Activated CD4-positive, alpha-beta memory T cell treated with anti-CD3 and anti-CD28 coated beads for 36 hours (primary cell): ENCODE measurements at regions of chr1 and their contacts with region 1.

Region 1: GRCh38 chr1:184386312-184387068 is at the start of gene C1orf21:
- DNase-seq: peak; percentile 82
- H3K4me3 Mint-ChIP-seq: peak within 1 kb of the TSS; percentile 74
- H3K27ac Mint-ChIP-seq: no peak within 1 kb of the TSS
- H3K4me1 Mint-ChIP-seq: peaks cover 15% of the 10 kb centered on the region
- H3K27me3 Mint-ChIP-seq: peaks cover 69% of the 10 kb centered on the region
- total RNA-seq, gene C1orf21: 1.9 to 2.2 TPM

Region 2: GRCh38 chr1:183989078-183989577 is 397.4 kb before region 1 on chr1:
- CTCF ChIA-PET with region 1: no interaction called
- POLR2A ChIA-PET with region 1: no interaction called
- intact Hi-C with region 1: no loop called
- DNase-seq: peak; percentile 79
- H3K4me3 Mint-ChIP-seq: no peak overlapping the region
- H3K27ac Mint-ChIP-seq: no peak overlapping the region
- H3K4me1 Mint-ChIP-seq: peaks cover 19% of the 10 kb centered on the region
- H3K27me3 Mint-ChIP-seq: no peaks in the 10 kb centered on the region

Region 3: DNA sequence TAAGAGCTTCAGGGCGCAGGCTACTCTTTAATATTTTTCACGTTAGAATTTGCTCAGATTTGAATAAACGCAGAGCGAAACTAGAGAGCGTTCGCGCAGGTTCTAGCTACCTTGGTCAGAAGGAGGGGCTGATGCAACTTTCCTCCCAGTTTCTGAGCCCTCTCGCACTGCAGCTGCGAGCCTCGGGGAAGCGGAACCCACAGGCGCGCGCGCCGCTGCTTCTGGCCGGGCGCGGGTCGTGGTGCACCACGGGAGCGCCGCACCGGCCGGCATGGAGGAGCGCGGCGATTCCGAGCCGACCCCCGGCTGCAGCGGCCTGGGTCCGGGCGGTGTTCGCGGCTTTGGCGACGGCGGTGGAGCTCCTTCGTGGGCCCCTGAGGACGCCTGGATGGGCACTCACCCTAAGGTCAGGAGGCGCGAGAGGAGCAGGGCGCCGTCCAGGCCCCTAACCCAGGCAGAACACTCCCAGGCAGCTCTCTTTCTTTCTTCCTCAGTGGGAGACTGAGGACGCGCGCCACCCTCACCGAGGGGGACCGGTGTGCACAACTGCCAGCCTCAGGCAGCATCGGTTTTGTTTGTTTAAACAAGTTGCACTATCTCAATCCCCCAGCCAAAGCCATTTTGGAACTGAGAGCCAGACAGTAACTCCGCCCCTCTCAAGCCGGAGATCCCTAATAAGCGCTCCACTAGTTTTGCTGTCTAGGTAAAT is 334.9 kb before region 1 on chr1 and contains the start of gene TSEN15:
- CTCF ChIA-PET with region 1: no interaction called
- POLR2A ChIA-PET with region 1: no interaction called
- intact Hi-C with region 1: loop called (anchors 10 kb)
- DNase-seq: peak; percentile 85
- H3K4me3 Mint-ChIP-seq: peak within 1 kb of the TSS; percentile 98
- H3K27ac Mint-ChIP-seq: peak within 1 kb of the TSS; percentile 96
- H3K4me1 Mint-ChIP-seq: peaks cover 33% of the 10 kb centered on the region
- H3K27me3 Mint-ChIP-seq: peaks cover 6% of the 10 kb centered on the region
- total RNA-seq, gene TSEN15: 44.1 to 44.3 TPM

Region 4: GRCh38 chr1:184489908-184490307 is 103.4 kb after region 1 on chr1:
- CTCF ChIA-PET with region 1: no interaction called
- POLR2A ChIA-PET with region 1: no interaction called
- intact Hi-C with region 1: loop called (anchors 2 kb)
- DNase-seq: no peak
- H3K4me3 Mint-ChIP-seq: no peak overlapping the region
- H3K27ac Mint-ChIP-seq: no peak overlapping the region
- H3K4me1 Mint-ChIP-seq: peaks cover 11% of the 10 kb centered on the region
- H3K27me3 Mint-ChIP-seq: peaks cover 3% of the 10 kb centered on the region